ENCODE measurements at regions of chr18 and their contacts with region 1.

Region 1: DNA sequence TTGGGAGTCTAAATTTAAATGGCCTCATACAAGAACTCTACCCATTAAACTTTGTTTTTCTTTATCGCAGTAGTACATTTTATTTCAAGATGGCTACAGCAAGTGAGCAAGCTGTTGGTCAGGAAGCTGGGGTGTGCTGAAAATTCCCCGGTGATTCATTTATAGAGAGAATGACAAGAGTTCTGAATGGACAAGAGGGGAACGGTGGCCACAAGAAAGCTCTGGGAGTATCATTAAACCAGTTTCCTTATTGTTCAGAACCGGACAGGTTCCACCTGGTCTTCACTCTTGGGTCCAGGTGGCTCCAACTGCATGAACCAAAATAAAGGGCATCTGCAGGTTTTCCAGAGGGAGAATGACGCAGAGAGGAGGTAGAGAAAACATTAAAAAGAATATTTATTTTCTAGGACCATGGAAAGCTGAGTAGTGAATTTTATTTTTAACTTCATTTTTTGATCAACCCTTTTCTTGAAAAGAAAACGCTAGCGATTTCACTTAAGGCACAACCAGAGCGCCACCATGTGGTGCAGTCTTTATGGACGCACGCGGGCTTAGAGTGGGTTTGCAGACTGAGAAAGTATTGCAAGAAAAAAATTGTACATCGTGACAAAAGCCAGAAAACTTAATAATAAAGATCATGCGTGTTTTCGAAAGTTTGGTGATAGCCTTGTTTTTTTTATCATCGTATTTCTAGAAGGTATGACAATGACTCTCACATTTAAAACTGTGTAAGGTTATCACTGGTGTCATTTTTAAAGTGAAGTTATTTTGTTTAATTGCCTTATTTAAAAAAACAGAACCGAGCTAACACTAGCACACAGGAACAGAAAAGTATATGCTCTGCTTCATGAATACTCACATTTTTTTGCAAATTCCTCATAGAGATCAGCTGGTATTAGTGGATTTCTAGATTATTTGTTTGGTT is 97.9 kb upstream of the NOL4 start:
- DNase-seq: peak; percentile 62
- H3K4me3 Mint-ChIP-seq: peak overlapping the region; percentile 60
- H3K27ac Mint-ChIP-seq: peak overlapping the region; percentile 82
- H3K4me1 Mint-ChIP-seq: peaks cover 9% of the 10 kb centered on the region
- H3K27me3 Mint-ChIP-seq: no peaks in the 10 kb centered on the region
- CTCF ChIP-seq: peak; percentile 87

Region 2: GRCh38 chr18:33751613-33752221 is 570.9 kb before region 1 on chr18:
- CTCF ChIA-PET with region 1: no interaction called
- intact Hi-C with region 1: loop called (anchors 1 kb)
- DNase-seq: no peak
- H3K4me3 Mint-ChIP-seq: no peak overlapping the region
- H3K27ac Mint-ChIP-seq: no peak overlapping the region
- H3K4me1 Mint-ChIP-seq: no peaks in the 10 kb centered on the region
- H3K27me3 Mint-ChIP-seq: no peaks in the 10 kb centered on the region
- CTCF ChIP-seq: no peak

Region 3: DNA sequence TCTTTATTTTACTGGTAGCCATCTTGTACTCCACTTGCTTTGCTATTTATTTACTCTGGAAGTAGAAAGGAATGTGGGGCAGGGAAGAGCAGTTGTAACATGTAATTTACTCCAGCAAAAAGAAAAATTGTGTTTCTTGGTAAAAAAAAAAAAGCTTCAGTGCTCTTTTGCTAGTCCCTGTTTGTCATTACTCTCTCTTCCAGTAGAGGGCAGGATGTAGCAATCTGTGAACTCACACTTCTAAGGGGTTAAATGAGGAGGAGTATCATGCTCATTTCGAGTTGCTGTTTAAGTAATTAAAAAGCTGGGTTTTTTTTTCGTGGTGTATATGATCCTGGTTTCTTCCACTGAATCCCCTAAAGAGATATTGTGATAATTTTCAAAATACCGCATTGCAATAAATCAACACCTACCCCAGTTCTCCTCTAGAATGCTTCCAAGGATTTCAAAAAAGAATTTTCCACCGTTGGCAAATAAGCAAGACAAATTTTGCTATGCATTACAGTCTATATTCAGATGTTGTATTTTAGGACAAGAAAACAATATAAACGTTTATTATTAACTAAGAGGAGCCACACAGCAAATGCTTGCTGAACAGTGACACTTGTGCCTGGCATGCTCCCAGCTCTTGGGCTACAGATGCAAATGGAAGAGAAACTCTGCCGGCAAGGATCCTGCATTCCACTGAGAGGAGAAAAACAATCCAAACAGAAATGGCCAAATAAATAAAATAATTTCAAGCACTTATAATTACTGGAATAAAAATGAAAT is 483.0 kb before region 1 on chr18:
- CTCF ChIA-PET with region 1: no interaction called
- intact Hi-C with region 1: loop called (anchors 2 kb)
- DNase-seq: peak; percentile 38
- H3K4me3 Mint-ChIP-seq: no peak overlapping the region
- H3K27ac Mint-ChIP-seq: no peak overlapping the region
- H3K4me1 Mint-ChIP-seq: peaks cover 9% of the 10 kb centered on the region
- H3K27me3 Mint-ChIP-seq: no peaks in the 10 kb centered on the region
- CTCF ChIP-seq: peak; percentile 80

Region 4: GRCh38 chr18:34122724-34123334 is 199.8 kb before region 1 on chr18:
- CTCF ChIA-PET with region 1: interaction called, 34 read pairs
- intact Hi-C with region 1: loop called (anchors 1 kb)
- DNase-seq: peak; percentile 30
- H3K4me3 Mint-ChIP-seq: no peak overlapping the region
- H3K27ac Mint-ChIP-seq: no peak overlapping the region
- H3K4me1 Mint-ChIP-seq: peaks cover 29% of the 10 kb centered on the region
- H3K27me3 Mint-ChIP-seq: no peaks in the 10 kb centered on the region
- CTCF ChIP-seq: peak; percentile 90

Region 5: GRCh38 chr18:34224423-34225217 is 98.0 kb before region 1 on chr18 and contains the start of gene NOL4:
- CTCF ChIA-PET with region 1: no interaction called
- intact Hi-C with region 1: loop called (anchors 5 kb)
- DNase-seq: peak; percentile 19
- H3K4me3 Mint-ChIP-seq: no peak within 1 kb of the TSS
- H3K27ac Mint-ChIP-seq: no peak within 1 kb of the TSS
- H3K4me1 Mint-ChIP-seq: peaks cover 30% of the 10 kb centered on the region
- H3K27me3 Mint-ChIP-seq: peaks cover 50% of the 10 kb centered on the region
- CTCF ChIP-seq: no peak
- total RNA-seq, gene NOL4: not detected in 2 replicates

Region 6: DNA sequence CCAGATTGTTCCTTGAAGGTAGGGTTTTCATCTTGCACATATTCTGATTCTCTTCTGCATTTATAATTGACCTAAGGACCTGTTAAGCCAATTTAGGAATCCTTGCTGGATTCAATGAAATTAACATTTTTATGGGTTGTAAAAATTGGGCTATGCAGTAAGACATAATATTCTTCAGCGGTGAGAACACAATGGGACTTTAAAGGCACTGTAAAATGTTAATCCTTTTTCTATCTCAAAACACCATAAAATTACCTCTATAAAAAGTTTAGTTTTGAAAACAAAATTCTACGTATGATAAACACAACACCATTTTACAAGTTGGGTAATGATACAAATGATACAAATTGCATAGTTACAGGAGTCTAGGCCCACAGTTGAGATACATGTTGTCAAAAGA is 218.3 kb after region 1 on chr18:
- CTCF ChIA-PET with region 1: no interaction called
- intact Hi-C with region 1: no loop called
- DNase-seq: no peak
- H3K4me3 Mint-ChIP-seq: no peak overlapping the region
- H3K27ac Mint-ChIP-seq: no peak overlapping the region
- H3K4me1 Mint-ChIP-seq: no peaks in the 10 kb centered on the region
- H3K27me3 Mint-ChIP-seq: no peaks in the 10 kb centered on the region
- CTCF ChIP-seq: no peak

Measured in Calu3 (cell line).